ENCODE measurements at regions of chr1 and their contacts with region 1.

Region 1: GRCh38 chr1:53278201-53278725 is 39.9 kb upstream of the MAGOH start:
- DNase-seq: peak; percentile 46 to 54
- H3K4me3 ChIP-seq: no peak overlapping the region
- H3K27ac ChIP-seq: no peak overlapping the region
- H3K4me1 ChIP-seq: no peaks in the 10 kb centered on the region
- H3K27me3 ChIP-seq: no peaks in the 10 kb centered on the region
- CTCF ChIP-seq: peak; percentile 82 to 87 (median 84)
- POLR2A ChIP-seq: no peak

Region 2: GRCh38 chr1:52976183-52977035 is 301.9 kb before region 1 on chr1:
- intact Hi-C with region 1: no loop called
- DNase-seq: no peak
- H3K4me3 ChIP-seq: no peak overlapping the region
- H3K27ac ChIP-seq: no peak overlapping the region
- H3K4me1 ChIP-seq: no peaks in the 10 kb centered on the region
- H3K27me3 ChIP-seq: no peaks in the 10 kb centered on the region
- CTCF ChIP-seq: no peak
- POLR2A ChIP-seq: no peak

Region 3: DNA sequence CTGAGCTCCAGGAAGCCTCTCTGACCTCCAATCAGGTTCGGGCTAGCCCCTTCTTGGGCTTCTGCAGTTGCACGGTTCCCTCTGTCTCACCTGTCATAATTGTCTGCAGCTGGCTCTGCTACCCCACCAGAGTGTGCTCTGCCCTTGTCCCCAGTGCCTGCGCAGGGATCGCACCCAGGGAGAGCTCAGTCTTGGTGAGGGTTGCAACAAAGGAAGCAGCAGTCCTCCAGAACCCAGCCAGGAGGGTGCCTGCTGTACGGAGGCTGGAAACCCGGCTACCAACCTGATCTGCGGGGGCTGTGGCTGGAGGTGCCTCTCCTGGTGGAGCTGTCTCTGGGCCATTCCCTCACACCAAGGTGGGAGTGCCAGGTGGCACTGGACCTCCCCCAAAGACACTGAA is 117.5 kb after region 1 on chr1:
- intact Hi-C with region 1: loop called (anchors 2 kb)
- DNase-seq: no peak
- H3K4me3 ChIP-seq: no peak overlapping the region
- H3K27ac ChIP-seq: no peak overlapping the region
- H3K4me1 ChIP-seq: no peaks in the 10 kb centered on the region
- H3K27me3 ChIP-seq: no peaks in the 10 kb centered on the region
- CTCF ChIP-seq: no peak
- POLR2A ChIP-seq: no peak

Measured in uterus (tissue), 4 donors.